ENCODE measurements at regions of chr4 and their contacts with region 1.

Region 1: DNA sequence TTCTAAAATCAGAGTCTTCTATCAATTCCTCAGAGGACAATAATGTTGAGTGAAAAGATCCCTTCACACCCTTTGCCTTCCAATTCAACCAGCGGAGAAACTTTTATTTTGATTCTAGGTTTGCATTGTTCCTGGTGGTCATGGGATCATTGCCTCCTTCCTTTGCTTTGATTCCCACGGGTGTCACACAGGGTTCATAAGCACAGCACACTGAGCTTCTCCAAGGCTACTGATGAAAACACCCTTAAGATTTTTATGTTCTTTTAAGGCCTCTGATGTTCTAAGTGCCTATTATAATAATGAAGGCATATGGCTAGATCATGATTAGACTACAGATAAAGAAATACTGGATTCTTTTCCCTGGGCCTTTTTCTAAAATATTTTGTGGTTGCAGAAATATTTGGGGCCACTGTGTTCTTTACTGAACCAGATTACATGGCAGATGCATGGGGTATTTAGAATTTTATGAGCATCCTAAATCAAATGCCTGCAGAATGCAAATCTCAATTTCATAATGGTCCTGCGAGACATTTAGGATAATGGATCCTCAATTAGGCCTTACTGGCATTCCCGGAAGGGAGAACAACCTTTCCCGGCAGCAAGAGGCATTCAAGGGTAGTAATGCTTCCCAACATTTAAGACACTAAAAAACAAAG is 43.9 kb upstream of the FGFBP2 start:
- DNase-seq: no peak
- ATAC-seq: no peak
- H3K4me3 Mint-ChIP-seq: no peak overlapping the region
- H3K27ac Mint-ChIP-seq: no peak overlapping the region
- H3K4me1 Mint-ChIP-seq: no peaks in the 10 kb centered on the region
- H3K27me3 Mint-ChIP-seq: peaks cover 2% of the 10 kb centered on the region
- CTCF ChIP-seq: no peak

Region 2: DNA sequence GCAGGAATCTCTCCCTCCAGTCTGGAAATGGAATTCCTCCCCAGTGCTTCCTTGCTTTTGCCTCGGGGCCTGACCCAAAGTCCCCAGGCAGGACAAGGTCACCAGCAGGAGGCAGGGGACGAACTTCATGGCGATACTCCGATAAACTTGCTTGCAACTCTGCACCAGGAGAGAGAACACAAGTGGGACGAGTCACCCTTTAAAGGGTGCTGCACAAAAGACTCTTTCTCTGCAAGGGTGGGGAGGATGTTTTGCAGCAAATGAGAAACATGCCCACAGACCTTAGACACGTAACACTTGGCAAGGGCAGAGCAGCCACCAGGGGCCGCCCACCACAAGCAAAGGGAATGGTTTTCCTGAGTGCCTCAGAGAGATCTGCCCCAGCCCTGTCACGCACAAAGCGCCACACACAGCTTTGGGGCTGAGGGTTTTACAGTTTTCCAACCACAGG is 43.9 kb before region 1 on chr4 and contains the start of gene FGFBP2:
- CTCF ChIA-PET with region 1: interaction called, 50 read pairs
- POLR2A ChIA-PET with region 1: no interaction called
- intact Hi-C with region 1: no loop called
- DNase-seq: peak; percentile 92
- ATAC-seq: peak; percentile 77
- H3K4me3 Mint-ChIP-seq: peak within 1 kb of the TSS; percentile 59
- H3K27ac Mint-ChIP-seq: peak within 1 kb of the TSS; percentile 86
- H3K4me1 Mint-ChIP-seq: peaks cover 42% of the 10 kb centered on the region
- H3K27me3 Mint-ChIP-seq: peaks cover 2% of the 10 kb centered on the region
- CTCF ChIP-seq: no peak
- total RNA-seq, gene FGFBP2: 6.3 to 8.2 TPM

Region 3: DNA sequence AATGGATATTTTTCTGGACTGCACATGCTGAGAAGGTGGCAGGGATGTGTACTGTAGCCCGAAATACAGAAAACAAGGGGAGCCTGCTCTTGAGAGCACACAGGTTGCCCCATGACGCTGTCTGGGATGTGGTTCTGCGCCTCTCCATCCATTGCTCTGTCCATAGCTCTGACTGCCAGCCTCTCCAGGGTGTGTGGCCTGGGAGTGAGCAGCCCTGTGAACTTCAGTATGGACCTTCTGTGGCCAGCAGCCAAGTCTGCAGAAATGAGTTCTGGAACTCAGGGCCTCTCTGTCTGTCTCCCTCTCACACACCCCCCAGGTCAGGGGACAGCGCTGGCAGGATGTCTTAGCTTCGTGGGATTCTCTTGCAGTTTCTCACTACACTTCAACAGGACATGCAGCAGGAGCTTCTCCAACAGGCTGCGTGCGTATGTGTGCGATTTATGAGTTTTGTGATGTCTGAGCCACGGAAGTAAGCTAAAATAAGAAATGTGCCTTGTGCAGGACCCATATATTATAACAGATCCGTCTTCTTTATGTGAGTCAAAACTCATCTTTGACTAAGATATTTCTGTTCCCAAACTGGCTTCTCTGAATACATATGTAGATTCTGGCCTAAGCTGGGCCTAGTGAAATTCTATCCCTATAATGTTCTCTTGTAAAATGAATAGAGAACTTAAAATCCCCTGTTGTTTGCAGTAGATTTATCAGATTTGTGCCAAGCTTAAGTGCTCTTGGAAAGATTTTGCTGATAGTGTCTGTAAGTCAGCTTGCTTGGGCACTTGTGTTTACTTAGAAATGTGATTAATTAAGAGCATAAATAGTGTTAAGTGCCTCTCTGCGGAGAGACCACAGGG is 37.0 kb after region 1 on chr4:
- CTCF ChIA-PET with region 1: no interaction called
- POLR2A ChIA-PET with region 1: no interaction called
- intact Hi-C with region 1: no loop called
- DNase-seq: no peak
- ATAC-seq: no peak
- H3K4me3 Mint-ChIP-seq: no peak overlapping the region
- H3K27ac Mint-ChIP-seq: no peak overlapping the region
- H3K4me1 Mint-ChIP-seq: no peaks in the 10 kb centered on the region
- H3K27me3 Mint-ChIP-seq: peaks cover 2% of the 10 kb centered on the region
- CTCF ChIP-seq: no peak